ENCODE measurements at regions of chr13 and their contacts with region 1.

Region 1: DNA sequence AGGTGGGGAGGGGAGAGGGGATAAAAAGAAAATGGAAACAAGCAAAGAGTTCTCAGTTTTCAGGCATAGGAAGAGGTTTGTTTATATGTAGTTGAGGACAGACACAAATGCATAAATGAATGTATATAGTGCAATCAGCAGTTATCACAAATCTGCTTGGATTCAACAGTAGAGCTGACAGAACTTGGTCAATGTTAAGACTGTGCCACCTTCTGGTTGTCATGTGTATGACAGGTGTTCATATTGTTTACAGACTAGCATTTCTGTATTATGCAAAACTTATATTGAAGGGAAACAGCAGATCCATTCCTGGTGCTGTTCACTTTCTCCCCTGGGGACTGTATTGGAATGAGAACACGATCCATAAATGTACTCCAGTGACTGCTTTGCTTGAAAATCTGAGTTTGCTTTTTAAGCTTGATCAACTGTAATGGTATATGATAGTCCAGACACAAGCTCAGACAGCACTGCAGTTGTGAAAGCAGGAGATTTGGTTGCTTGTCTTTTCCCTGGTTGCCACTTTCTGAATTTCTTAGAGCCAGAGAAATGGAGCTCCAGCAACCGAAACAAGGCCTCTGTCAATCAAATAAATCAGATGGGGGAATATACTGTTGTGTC is 319.5 kb upstream of the OBI1 start:
- DNase-seq: peak; percentile 43
- H3K4me3 ChIP-seq: no peak overlapping the region
- H3K27ac ChIP-seq: no peak overlapping the region
- H3K4me1 ChIP-seq: no peaks in the 10 kb centered on the region
- H3K27me3 ChIP-seq: no peaks in the 10 kb centered on the region
- CTCF ChIP-seq: peak; percentile 52

Region 2: DNA sequence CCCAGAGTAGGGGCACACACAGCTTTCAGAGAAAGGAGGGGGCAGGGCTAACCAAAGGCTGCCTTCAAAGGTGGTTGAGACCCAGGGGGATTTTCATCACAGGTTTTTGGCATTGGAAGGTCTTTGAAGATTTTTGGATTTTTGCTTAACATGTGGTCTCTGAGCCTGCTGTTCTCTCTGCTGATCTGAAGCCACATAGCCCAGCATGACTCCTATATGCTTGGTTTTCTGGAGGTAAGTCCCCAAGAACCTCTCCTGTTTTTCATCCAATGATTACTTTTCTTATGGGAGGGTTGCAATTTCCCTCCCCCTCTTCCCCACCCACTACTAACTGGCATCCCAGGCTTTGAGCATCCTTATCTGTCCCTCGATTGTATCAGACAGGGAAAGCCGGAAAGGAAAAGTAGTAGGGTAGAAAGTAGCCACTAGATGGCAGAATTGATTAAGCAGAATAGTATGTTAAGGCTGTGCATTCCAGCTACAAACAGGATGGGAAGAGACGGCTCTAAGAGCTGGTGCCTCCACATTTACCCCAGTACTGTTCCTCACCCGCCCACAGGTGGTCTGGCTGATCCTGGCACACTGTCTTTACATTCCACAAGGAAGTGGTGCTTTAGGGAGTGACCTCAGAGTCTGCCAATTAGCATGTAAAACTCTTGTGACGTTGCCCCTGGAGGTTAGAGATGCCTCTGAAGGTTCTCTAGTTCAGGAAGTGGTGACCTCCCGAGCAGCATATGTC is 840.9 kb before region 1 on chr13:
- intact Hi-C with region 1: loop called (anchors 5 kb)
- DNase-seq: no peak
- H3K4me3 ChIP-seq: no peak overlapping the region
- H3K27ac ChIP-seq: no peak overlapping the region
- H3K4me1 ChIP-seq: no peaks in the 10 kb centered on the region
- H3K27me3 ChIP-seq: no peaks in the 10 kb centered on the region
- CTCF ChIP-seq: peak; percentile 63

Region 3: GRCh38 chr13:78241278-78241919 is 737.1 kb before region 1 on chr13:
- intact Hi-C with region 1: loop called (anchors 5 kb)
- DNase-seq: peak; percentile 35
- H3K4me3 ChIP-seq: no peak overlapping the region
- H3K27ac ChIP-seq: no peak overlapping the region
- H3K4me1 ChIP-seq: no peaks in the 10 kb centered on the region
- H3K27me3 ChIP-seq: no peaks in the 10 kb centered on the region
- CTCF ChIP-seq: peak; percentile 45